Activated naive CD4-positive, alpha-beta T cell treated with anti-CD3 and anti-CD28 coated beads for 36 hours (primary cell): ENCODE measurements at regions of chr15 and their contacts with region 1.

Region 1: DNA sequence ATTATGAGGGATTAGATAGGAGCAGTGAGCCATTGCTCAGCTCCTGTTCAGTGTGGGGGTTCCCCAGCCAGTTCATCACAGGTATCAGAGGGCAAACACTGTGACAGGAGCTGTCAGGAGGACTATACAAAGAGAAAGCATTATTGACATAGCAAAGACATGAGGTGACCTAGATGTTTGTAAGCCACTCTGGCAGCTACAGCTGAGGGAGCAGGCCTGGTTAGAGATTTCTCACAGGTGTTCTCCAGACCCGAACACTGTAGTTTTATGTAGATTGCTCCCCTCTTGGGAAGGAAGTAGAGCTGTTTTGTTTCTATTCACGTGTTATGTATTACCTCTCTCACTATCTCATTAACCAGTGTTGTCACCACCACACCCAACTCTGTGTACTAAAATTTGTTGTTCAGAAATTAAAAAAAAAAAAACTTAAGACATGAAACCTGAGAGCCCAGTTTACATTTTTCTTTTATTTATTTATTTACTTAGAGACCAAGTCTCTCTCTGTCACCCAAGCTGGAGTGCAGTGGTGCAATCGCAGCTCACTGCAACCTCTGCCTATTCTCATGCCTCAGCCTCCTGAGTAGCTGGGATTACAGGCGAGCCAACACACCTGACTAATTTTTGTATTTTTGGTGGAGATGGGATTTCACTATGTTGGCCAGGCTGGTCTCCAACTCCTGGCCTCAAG is 123.7 kb downstream of the RBPMS2 start:
- DNase-seq: peak; percentile 72
- H3K4me3 Mint-ChIP-seq: peak overlapping the region; percentile 7
- H3K27ac Mint-ChIP-seq: peak overlapping the region; percentile 78
- H3K4me1 Mint-ChIP-seq: peaks cover 44% of the 10 kb centered on the region
- H3K27me3 Mint-ChIP-seq: no peaks in the 10 kb centered on the region

Region 2: DNA sequence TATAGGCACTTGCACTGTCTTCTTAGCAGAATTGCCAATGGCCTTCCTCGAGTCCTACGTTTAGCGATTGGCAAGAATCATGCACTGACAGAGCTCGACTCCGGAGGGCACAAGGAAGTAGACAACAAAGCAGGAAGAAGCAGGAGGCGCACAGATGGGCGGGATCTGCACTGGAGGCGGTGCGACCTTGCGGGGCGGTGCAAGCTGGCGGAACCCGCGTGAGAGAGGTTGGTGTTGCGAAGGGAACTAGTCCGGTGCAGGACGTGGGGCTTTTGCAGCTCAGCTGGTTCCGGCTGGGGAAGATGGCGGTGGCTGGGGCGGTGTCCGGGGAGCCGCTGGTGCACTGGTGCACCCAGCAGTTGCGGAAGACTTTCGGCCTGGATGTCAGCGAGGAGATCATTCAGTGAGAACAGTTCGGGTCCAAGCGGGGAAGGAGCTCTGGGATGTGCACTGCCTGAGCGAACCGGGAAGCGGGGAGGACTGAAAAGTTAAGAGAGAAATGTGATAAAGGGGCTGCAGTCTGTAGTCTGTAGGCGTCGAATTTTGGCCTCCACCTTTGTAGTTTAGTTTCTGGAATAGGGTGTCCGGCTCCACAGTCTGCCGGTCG is 264.1 kb before region 1 on chr15 and contains the start of gene TRIP4:
- CTCF ChIA-PET with region 1: interaction called, 5 read pairs
- intact Hi-C with region 1: loop called (anchors 1 kb)
- DNase-seq: peak; percentile 98
- H3K4me3 Mint-ChIP-seq: peak within 1 kb of the TSS; percentile 94
- H3K27ac Mint-ChIP-seq: peak within 1 kb of the TSS; percentile 78
- H3K4me1 Mint-ChIP-seq: peaks cover 15% of the 10 kb centered on the region
- H3K27me3 Mint-ChIP-seq: no peaks in the 10 kb centered on the region
- total RNA-seq, gene TRIP4: 13.7 to 14.5 TPM

Region 3: DNA sequence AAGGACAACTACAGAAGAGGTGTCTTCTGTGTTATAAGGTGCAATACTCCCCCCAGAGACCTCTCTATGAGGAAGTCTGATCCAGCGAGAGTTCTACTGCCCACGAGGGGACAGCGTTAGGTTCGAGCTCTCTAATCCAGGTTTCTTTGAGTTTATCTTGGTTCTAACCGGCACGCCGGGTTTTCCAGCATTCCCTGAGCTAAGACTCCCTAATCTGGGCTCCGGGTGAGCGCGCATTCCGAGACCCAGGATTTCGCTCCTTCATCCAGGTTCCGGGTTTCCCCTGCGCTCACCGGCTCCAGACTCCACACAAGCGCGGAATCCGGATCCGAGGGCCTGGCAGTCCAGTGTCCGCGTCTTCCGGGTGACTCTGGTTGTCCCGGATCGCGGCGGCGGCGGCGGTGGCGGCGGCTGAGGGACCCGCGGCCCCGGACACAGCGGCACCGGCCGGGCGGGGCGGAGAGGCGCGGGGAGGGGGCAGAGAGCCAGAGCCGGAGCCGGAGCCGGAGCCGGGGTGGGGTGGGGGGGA is 191.4 kb before region 1 on chr15 and contains the start of gene ZNF609:
- CTCF ChIA-PET with region 1: interaction called, 6 read pairs
- intact Hi-C with region 1: loop called (anchors 1 kb)
- DNase-seq: peak; percentile 94
- H3K4me3 Mint-ChIP-seq: peak within 1 kb of the TSS; percentile 85
- H3K27ac Mint-ChIP-seq: peak within 1 kb of the TSS; percentile 82
- H3K4me1 Mint-ChIP-seq: peaks cover 77% of the 10 kb centered on the region
- H3K27me3 Mint-ChIP-seq: no peaks in the 10 kb centered on the region
- total RNA-seq, gene ZNF609: 39.5 to 40.4 TPM

Region 4: GRCh38 chr15:64622410-64623260 is 29.1 kb before region 1 on chr15:
- CTCF ChIA-PET with region 1: interaction called, 3 read pairs
- intact Hi-C with region 1: loop called (anchors 1 kb)
- DNase-seq: peak; percentile 71
- H3K4me3 Mint-ChIP-seq: peak overlapping the region; percentile 59
- H3K27ac Mint-ChIP-seq: peak overlapping the region; percentile 96
- H3K4me1 Mint-ChIP-seq: peaks cover 95% of the 10 kb centered on the region
- H3K27me3 Mint-ChIP-seq: no peaks in the 10 kb centered on the region

Region 5: DNA sequence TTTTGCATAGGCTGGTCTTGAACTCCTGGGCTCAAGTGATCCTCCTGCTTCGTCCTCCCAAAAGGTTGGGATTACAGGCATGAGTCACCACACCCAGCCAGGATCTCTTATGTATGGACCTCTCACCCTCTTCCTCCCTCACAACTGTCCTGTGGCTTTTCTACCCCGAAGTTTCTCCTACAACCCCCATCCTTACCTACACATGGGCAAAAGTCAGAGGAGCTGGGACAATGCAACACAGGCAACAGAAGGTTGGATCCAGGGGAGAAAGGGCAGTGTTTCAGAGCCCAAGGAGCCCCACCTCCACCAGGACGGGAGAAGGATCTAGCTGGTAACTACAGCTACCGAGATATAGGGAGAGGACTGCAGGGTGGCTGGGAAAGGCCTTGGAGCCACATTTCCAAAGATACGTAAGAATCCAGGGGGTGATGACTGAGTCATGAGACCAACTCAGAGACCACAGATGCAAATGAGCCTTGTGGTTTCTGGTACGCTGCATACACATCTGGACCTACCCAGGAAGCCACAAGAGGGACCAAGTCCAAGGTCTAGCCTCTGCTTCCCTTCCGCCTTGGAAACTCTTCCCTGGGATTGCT is 757.4 kb after region 1 on chr15:
- CTCF ChIA-PET with region 1: no interaction called
- intact Hi-C with region 1: no loop called
- DNase-seq: no peak
- H3K4me3 Mint-ChIP-seq: no peak overlapping the region
- H3K27ac Mint-ChIP-seq: no peak overlapping the region
- H3K4me1 Mint-ChIP-seq: no peaks in the 10 kb centered on the region
- H3K27me3 Mint-ChIP-seq: peaks cover 8% of the 10 kb centered on the region